ENCODE measurements at regions of chr2 and their contacts with region 1.

Region 1: DNA sequence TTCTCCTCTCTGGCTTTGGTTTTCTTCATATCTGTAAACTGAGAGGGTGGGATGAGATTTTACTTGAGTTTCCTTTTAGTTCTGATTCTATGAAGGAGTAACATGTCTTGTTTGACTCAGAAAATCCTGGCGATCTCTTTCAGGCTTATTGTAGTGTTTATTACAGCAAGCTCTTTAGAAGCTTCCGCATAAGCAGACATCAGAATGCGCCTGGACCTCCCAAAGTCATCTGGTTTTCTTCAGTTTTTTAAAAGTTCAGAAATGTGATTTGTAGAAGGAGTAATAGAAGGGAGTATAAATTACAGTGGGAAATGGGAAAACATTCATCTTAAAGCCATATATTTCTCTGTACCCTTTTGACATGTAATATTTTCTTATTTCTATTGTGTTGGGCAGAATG is 68.4 kb downstream of the EML6 start:
- DNase-seq: no peak
- ATAC-seq: no peak

Region 2: GRCh38 chr2:54879598-54880332 is 87.9 kb after region 1 on chr2:
- intact Hi-C with region 1: loop called in 1 of 2 experiments (anchors 10 kb)
- DNase-seq: peak; percentile 56 to 58
- ATAC-seq: peak; percentile 99

Region 3: DNA sequence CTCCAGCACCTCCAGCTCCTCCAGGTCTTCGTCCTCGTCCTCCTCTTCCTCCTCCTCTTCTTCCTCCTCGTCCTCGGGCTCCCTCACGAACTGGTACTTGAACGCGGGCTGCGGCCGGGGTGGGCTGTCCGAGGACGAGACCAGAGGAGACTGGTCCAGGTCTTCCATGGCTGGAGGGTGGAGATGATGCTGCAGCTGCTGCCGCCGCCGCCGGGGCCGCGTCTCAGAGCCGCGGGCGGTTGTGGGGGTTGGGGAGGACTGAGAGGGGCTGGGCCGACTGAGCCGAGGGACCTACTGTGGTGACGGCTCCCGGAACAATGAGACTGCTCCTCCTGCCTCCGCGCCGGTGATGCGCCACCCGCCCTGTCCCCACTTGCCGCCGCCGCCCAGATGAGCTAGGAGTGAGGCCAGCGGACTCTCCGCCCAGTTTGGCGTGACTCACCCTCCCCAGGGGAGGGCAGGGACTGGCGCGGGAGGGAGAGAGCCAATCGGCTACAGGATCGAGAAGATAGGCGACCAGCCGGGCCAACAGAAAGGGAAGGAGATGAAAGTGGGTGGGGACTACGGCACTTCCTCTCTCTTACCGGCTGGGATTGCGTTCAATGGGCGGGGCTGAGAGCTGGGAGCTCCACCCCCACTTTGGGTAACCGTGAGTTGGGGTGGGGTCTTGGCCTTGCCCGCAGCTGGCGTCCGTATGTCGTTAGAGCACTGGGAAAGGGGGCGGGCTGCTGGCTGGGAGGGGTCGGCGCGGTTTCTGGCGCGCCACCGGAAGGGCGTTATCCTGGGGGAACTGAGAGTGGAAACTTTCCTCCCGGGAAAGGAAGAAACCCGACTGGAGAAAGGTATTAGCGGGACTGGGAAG is 258.5 kb after region 1 on chr2 and contains the start of gene RTN4:
- intact Hi-C with region 1: no loop called
- DNase-seq: peak; percentile 96 to 99
- ATAC-seq: peak; percentile 86
- total RNA-seq, gene RTN4: 237 to 280 TPM